ENCODE measurements at regions of chr12 and their contacts with region 1.

Region 1: DNA sequence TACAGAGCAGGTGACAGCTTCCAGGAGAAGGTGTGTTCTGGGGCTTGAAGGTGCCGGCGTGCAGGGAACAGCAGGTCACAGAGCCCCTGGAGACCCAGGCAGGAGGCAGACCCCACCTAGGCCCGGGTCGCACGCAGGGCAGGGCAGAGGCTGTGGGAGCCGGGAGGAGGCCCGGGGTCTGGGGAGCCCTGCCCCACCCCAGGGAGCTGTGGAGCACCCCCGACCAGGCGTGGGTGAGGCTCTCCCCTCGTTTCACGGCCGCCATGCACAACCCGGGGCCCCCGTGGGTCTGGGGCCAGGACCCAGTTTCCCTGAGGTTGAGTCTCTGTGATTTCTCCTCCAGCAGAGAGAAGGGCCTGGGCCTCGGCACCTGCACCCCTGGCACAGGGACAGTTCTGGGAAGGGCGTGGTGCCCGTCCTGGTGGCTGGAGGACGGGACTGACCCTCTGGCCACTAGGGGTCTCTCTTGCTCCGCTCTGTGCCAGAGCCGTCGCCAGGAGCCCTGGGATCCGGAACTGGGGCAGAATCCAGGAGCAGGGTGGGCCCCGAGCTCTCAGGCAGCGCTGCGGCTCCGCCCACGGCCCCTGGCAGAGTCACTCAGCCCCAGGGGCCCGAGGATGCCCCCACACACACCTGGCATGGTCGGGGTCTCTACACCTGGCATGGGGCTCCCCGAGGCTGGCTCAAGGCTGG is 75.2 kb upstream of the FBRSL1 start:
- DNase-seq: no peak
- H3K4me3 ChIP-seq: peak overlapping the region in 1 of 4 donors; percentile 18
- H3K27ac ChIP-seq: no peak overlapping the region
- H3K4me1 ChIP-seq: peaks cover 4 to 15% (median 11%) of the 10 kb centered on the region in 4 donors
- H3K27me3 ChIP-seq: peaks cover 0 to 74% (median 18%) of the 10 kb centered on the region in 4 donors
- CTCF ChIP-seq: peak; percentile 83 to 91 (median 86)
- EP300 ChIP-seq: no peak
- POLR2A ChIP-seq: no peak

Region 2: GRCh38 chr12:132153501-132154340 is 261.1 kb before region 1 on chr12:
- intact Hi-C with region 1: loop called (anchors 5 kb)
- DNase-seq: no peak
- H3K4me3 ChIP-seq: peak overlapping the region; percentile 30 to 53 (median 36)
- H3K27ac ChIP-seq: no peak overlapping the region
- H3K4me1 ChIP-seq: peaks cover 0 to 12% (median 9%) of the 10 kb centered on the region in 4 donors
- H3K27me3 ChIP-seq: no peaks in the 10 kb centered on the region
- CTCF ChIP-seq: peak; percentile 86 to 96 (median 88)
- EP300 ChIP-seq: no peak
- POLR2A ChIP-seq: no peak

Region 3: GRCh38 chr12:132285991-132286681 is 128.6 kb before region 1 on chr12:
- intact Hi-C with region 1: no loop called
- DNase-seq: no peak
- H3K4me3 ChIP-seq: peak overlapping the region; percentile 25 to 41 (median 34)
- H3K27ac ChIP-seq: no peak overlapping the region
- H3K4me1 ChIP-seq: peaks cover 10 to 18% (median 14%) of the 10 kb centered on the region in 4 donors
- H3K27me3 ChIP-seq: peaks cover 0 to 67% (median 10%) of the 10 kb centered on the region in 4 donors
- CTCF ChIP-seq: no peak
- EP300 ChIP-seq: no peak
- POLR2A ChIP-seq: no peak

Region 4: DNA sequence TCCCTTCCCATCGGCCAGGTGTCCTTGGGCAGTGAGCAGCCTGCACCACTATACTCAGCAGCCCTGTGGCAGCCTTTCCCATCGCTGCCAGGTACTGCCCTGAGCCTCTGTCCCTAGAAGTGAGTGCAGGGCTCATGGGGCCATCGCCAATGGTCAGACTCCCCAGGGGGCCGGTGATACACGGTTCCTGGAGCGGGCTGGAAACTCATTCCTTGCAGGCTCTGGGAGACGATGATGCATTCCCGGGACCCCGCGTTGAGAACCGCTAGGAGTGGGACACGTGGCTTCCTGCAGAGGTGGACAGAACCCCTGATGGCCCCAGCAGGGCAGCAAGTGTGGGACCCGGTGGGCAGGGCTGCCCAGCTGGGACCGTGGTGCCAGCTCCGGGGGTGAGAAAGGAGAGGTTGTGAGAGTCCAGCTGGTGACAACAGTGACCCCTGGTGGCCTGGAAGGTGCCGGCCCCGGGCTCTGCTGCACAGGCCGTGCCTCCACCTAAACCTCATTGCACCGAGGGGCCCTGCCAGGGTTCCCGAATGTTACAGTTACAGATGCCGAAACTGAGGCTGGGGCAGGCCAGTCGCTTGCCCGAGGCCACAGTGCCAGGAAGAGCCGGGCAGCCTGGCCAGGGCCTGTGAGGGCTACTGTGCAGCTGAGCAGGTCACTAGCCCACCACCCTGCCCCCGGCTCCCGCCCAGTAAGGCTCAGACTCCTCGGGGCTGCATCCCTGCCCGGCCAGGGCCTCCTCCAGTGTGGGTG is 109.0 kb after region 1 on chr12:
- intact Hi-C with region 1: loop called (anchors 5 kb)
- DNase-seq: no peak
- H3K4me3 ChIP-seq: no peak overlapping the region
- H3K27ac ChIP-seq: no peak overlapping the region
- H3K4me1 ChIP-seq: peaks cover 20 to 46% (median 30%) of the 10 kb centered on the region in 4 donors
- H3K27me3 ChIP-seq: no peaks in the 10 kb centered on the region
- CTCF ChIP-seq: peak; percentile 72 to 86 (median 73)
- EP300 ChIP-seq: no peak
- POLR2A ChIP-seq: no peak

Region 5: GRCh38 chr12:132614861-132615578 is 200.2 kb after region 1 on chr12:
- intact Hi-C with region 1: loop called (anchors 2 kb)
- DNase-seq: peak; percentile 95
- H3K4me3 ChIP-seq: no peak overlapping the region
- H3K27ac ChIP-seq: no peak overlapping the region
- H3K4me1 ChIP-seq: peaks cover 5 to 37% (median 33%) of the 10 kb centered on the region in 4 donors
- H3K27me3 ChIP-seq: peaks cover 0 to 66% (median 38%) of the 10 kb centered on the region in 4 donors
- CTCF ChIP-seq: peak; percentile 86 to 92 (median 92)
- EP300 ChIP-seq: no peak
- POLR2A ChIP-seq: no peak

Measured in esophagus muscularis mucosa (tissue), 4 donors.